Psoas muscle (tissue), 8 donors: ENCODE measurements at regions of chr6 and their contacts with region 1.

Region 1: DNA sequence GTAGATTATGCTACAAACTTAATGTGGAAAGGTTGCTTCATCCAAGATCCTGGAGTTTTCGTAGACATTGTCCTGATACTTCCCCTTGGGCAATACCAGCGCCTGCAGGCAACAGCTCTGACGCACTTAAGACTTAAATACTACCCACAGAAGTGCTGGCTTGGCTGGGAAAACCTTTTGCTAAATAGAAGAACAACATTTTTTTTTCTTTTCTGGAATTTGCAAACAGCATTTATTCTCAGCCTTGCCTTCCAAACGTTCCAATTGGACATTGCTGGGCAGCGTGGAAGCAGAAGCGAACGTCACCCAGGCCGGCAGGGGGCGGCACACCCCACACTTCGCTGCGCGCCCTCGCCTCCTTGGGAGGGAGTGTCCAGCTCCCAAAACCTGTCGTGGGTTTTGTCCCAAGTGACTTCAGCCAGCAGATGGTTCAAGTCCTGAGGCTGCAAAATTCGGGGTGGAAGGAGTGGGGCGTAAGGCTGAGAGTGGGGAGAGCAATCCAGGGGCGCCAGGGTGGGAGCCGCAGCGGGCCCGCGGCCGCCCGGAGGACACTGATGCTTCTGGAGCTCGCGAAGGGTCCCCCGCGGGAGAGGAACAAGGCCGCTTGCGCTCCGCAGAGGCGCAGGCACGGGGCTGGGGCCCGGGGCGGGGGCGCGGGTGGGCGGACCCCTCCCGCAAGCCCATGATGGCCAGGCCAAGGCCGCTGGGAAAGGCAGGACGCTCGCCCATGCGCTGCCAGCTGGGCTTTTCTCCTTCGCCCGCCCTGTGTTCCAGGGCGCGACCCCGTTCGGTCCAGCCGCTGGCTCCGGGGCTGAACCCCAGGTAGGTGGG is 60.8 kb upstream of the MAP3K4 start:
- DNase-seq: peak; percentile 76 to 82
- ATAC-seq: peak; percentile 90 to 99 (median 93)
- H3K4me3 ChIP-seq: peak overlapping the region; percentile 54
- H3K27ac ChIP-seq: no peak overlapping the region
- H3K4me1 ChIP-seq: no peaks in the 10 kb centered on the region
- H3K27me3 ChIP-seq: peaks cover 0 to 32% (median 1%) of the 10 kb centered on the region in 3 donors
- CTCF ChIP-seq: peak; percentile 92

Region 2: DNA sequence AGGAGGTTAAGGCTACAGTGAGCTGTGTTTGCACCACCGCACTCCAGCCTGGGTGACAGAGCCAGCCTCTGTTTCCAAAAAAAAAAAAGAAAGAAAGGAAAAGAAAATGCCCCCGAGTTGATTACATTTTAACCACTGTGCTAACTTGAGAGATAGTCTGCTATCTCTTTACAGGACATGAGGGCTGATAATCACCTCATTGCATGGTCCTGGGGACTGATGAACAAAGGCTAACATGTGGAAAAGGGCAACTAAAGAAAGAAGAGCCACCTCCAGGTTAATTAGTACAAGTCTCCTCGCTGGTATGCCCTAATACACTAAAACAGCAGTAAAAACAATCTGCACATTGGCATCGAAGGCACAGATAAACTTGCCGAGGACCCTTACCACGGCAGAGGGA is 232.9 kb before region 1 on chr6:
- intact Hi-C with region 1: no loop called
- DNase-seq: no peak
- ATAC-seq: no peak
- H3K4me3 ChIP-seq: no peak overlapping the region
- H3K27ac ChIP-seq: no peak overlapping the region
- H3K4me1 ChIP-seq: no peaks in the 10 kb centered on the region
- H3K27me3 ChIP-seq: no peaks in the 10 kb centered on the region
- CTCF ChIP-seq: no peak

Region 3: GRCh38 chr6:160863782-160864181 is 67.0 kb before region 1 on chr6:
- intact Hi-C with region 1: no loop called
- DNase-seq: no peak
- ATAC-seq: no peak
- H3K4me3 ChIP-seq: no peak overlapping the region
- H3K27ac ChIP-seq: no peak overlapping the region
- H3K4me1 ChIP-seq: no peaks in the 10 kb centered on the region
- H3K27me3 ChIP-seq: peaks cover 0 to 2% (median 0%) of the 10 kb centered on the region in 3 donors
- CTCF ChIP-seq: no peak

Region 4: DNA sequence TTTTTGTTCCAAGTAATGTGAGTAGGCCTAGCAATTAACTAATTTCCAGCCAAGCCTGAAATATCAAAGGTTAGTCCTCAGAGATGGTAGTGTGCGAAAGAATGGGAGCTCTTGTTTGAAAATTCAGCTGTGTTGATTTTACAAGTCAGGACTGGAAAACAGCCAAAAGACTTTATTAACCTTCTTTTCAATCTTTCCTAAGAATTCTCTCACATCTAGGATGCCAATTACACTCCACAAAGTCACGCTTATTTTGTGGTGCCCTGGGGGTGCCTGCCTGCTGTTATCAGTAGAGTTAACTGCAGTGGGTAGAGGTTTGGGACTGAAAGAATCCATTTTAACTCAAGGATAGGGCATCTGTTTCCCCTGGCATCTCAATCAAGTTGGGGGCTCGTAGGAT is 30.1 kb after region 1 on chr6:
- intact Hi-C with region 1: no loop called
- DNase-seq: no peak
- ATAC-seq: no peak
- H3K4me3 ChIP-seq: no peak overlapping the region
- H3K27ac ChIP-seq: no peak overlapping the region
- H3K4me1 ChIP-seq: no peaks in the 10 kb centered on the region
- H3K27me3 ChIP-seq: no peaks in the 10 kb centered on the region
- CTCF ChIP-seq: no peak

Region 5: DNA sequence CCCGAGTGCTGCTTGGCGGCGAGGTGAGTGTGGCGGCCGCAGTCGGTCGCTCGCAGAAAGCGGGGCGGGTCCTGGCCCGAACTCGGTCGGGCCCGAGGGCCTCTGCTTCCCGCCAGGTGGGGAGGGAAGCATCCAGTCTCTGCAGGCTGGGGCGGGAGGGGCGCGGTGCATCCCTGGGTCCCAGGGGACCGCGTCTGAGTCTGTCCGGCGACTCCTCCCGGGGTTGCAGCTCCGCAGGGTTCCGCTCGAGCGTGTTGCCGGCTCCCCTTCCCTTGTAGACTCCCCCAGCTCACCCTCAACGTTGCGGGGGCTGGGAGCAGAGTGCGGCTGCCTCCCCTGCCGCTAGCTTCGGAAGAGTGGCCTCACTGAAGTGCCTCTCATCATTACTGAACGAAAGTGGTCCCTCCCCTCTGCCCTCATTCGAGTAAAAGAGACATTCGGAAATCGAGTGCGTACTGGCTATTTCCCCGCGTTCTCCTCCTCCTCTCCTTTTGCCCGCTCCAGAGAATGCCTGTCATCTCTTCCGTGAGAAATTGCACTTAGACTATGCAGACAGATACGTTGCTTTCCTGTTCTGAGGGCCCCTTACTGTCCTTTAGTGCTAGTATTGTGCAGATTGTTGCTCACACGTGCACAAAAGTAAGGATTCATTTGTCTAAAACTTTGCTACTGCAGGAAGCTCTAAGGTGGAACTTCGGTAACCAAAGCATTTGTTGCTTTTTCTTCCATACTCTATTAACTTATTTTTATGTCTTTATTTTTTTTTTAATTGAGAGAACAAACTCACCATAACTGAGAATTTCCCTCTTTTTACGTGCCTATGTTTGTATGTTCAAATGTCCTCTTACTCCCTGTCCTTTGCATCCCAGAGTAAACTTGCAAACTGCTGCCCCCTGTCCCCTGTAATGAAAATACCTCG is 61.6 kb after region 1 on chr6:
- intact Hi-C with region 1: loop called in 1 of 2 experiments (anchors 2 kb)
- DNase-seq: peak; percentile 55 to 74
- ATAC-seq: peak; percentile 51 to 68 (median 56)
- H3K4me3 ChIP-seq: peak overlapping the region; percentile 94
- H3K27ac ChIP-seq: peak overlapping the region; percentile 93
- H3K4me1 ChIP-seq: peaks cover 26% of the 10 kb centered on the region
- H3K27me3 ChIP-seq: no peaks in the 10 kb centered on the region
- CTCF ChIP-seq: peak; percentile 47

Region 6: GRCh38 chr6:161079566-161080262 is 149.0 kb after region 1 on chr6:
- intact Hi-C with region 1: loop called in 1 of 2 experiments (anchors 5 kb)
- DNase-seq: no peak
- ATAC-seq: no peak
- H3K4me3 ChIP-seq: no peak overlapping the region
- H3K27ac ChIP-seq: no peak overlapping the region
- H3K4me1 ChIP-seq: no peaks in the 10 kb centered on the region
- H3K27me3 ChIP-seq: no peaks in the 10 kb centered on the region
- CTCF ChIP-seq: no peak

Region 7: GRCh38 chr6:161091972-161092701 is 161.4 kb after region 1 on chr6:
- intact Hi-C with region 1: loop called in 1 of 2 experiments (anchors 10 kb)
- DNase-seq: no peak
- ATAC-seq: no peak
- H3K4me3 ChIP-seq: no peak overlapping the region
- H3K27ac ChIP-seq: no peak overlapping the region
- H3K4me1 ChIP-seq: no peaks in the 10 kb centered on the region
- H3K27me3 ChIP-seq: no peaks in the 10 kb centered on the region
- CTCF ChIP-seq: no peak

Region 8: DNA sequence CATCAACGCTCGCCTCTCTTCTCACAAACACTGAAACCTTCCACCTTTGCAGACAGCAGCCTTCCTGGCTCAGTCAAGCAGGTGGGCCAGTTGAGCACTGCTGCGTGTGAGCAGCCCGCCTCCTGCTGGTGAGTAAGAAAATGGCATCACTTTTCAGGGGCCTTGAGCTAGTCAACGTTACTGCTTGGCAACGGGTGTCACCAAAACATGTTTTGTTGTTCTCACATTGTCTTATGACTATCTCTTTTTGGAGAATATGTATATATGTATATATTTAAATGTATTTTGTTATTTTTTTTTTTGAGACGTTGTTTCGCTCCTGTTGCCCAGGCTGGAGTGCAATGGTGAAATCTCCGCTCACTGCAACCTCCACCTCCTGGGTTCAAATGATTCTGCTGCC is 440.1 kb after region 1 on chr6:
- intact Hi-C with region 1: loop called (anchors 1 to 2 kb)
- DNase-seq: peak; percentile 40 to 67
- ATAC-seq: peak in 2 of 4 donors; percentile 41 to 49
- H3K4me3 ChIP-seq: no peak overlapping the region
- H3K27ac ChIP-seq: no peak overlapping the region
- H3K4me1 ChIP-seq: peaks cover 6% of the 10 kb centered on the region
- H3K27me3 ChIP-seq: no peaks in the 10 kb centered on the region
- CTCF ChIP-seq: peak; percentile 67

Region 9: GRCh38 chr6:161498359-161498758 is 567.6 kb after region 1 on chr6:
- intact Hi-C with region 1: loop called in 1 of 2 experiments (anchors 10 kb)
- DNase-seq: peak in 1 of 2 donors; percentile 58
- ATAC-seq: peak; percentile 91 to 96 (median 92)
- H3K4me3 ChIP-seq: no peak overlapping the region
- H3K27ac ChIP-seq: peak overlapping the region; percentile 3
- H3K4me1 ChIP-seq: peaks cover 10% of the 10 kb centered on the region
- H3K27me3 ChIP-seq: no peaks in the 10 kb centered on the region
- CTCF ChIP-seq: peak; percentile 60